T-cell (primary cell): ENCODE measurements at regions of chr14 and their contacts with region 1.

Region 1: DNA sequence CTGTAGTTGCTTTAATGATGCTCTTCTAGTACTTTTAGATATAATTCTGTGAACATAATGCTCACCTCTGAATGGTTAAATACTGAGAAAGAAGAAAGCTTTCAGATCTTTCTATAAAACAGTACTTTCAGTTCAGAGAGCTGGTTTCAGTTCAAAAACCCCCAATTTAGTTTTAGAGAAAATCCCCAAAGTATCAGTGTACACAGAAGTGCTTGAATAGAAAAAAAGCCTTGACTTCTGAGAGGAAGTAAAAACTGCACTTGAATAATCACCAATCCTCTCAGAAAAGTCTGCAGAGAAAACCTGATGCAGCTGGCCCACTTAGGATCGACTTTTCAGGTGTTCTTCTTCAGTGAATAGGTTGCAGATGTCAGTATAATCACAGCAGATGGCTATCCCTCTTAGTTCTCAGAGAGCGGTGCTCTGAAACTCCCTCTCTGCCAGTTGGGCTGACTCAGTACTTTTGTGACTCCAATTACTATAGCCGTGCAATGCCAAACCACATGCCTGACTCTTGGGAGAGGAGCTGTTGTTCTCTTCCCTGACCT is 616.3 kb downstream of the LRFN5 start:
- DNase-seq: no peak
- ATAC-seq: no peak
- H3K4me3 ChIP-seq: no peak overlapping the region
- H3K4me3 Mint-ChIP-seq: no peak overlapping the region
- H3K27ac ChIP-seq: no peak overlapping the region
- H3K27ac Mint-ChIP-seq: no peak overlapping the region
- H3K4me1 ChIP-seq: no peaks in the 10 kb centered on the region
- H3K4me1 Mint-ChIP-seq: no peaks in the 10 kb centered on the region
- H3K27me3 ChIP-seq: no peaks in the 10 kb centered on the region
- H3K27me3 Mint-ChIP-seq: no peaks in the 10 kb centered on the region

Region 2: GRCh38 chr14:42248151-42248550 is 25.2 kb after region 1 on chr14:
- CTCF ChIA-PET with region 1: no interaction called
- POLR2A ChIA-PET with region 1: interaction called in 1 of 2 experiments, 10 read pairs
- DNase-seq: no peak
- ATAC-seq: no peak
- H3K4me3 ChIP-seq: no peak overlapping the region
- H3K4me3 Mint-ChIP-seq: no peak overlapping the region
- H3K27ac ChIP-seq: no peak overlapping the region
- H3K27ac Mint-ChIP-seq: no peak overlapping the region
- H3K4me1 ChIP-seq: no peaks in the 10 kb centered on the region
- H3K4me1 Mint-ChIP-seq: no peaks in the 10 kb centered on the region
- H3K27me3 ChIP-seq: no peaks in the 10 kb centered on the region
- H3K27me3 Mint-ChIP-seq: no peaks in the 10 kb centered on the region

Region 3: GRCh38 chr14:42277840-42278239 is 54.8 kb after region 1 on chr14:
- CTCF ChIA-PET with region 1: no interaction called
- POLR2A ChIA-PET with region 1: no interaction called
- DNase-seq: no peak
- ATAC-seq: no peak
- H3K4me3 ChIP-seq: no peak overlapping the region
- H3K4me3 Mint-ChIP-seq: no peak overlapping the region
- H3K27ac ChIP-seq: no peak overlapping the region
- H3K27ac Mint-ChIP-seq: no peak overlapping the region
- H3K4me1 ChIP-seq: no peaks in the 10 kb centered on the region
- H3K4me1 Mint-ChIP-seq: no peaks in the 10 kb centered on the region
- H3K27me3 ChIP-seq: no peaks in the 10 kb centered on the region
- H3K27me3 Mint-ChIP-seq: no peaks in the 10 kb centered on the region